Tibial artery (tissue), 4 donors: ENCODE measurements at regions of chr3 and their contacts with region 1.

Region 1: DNA sequence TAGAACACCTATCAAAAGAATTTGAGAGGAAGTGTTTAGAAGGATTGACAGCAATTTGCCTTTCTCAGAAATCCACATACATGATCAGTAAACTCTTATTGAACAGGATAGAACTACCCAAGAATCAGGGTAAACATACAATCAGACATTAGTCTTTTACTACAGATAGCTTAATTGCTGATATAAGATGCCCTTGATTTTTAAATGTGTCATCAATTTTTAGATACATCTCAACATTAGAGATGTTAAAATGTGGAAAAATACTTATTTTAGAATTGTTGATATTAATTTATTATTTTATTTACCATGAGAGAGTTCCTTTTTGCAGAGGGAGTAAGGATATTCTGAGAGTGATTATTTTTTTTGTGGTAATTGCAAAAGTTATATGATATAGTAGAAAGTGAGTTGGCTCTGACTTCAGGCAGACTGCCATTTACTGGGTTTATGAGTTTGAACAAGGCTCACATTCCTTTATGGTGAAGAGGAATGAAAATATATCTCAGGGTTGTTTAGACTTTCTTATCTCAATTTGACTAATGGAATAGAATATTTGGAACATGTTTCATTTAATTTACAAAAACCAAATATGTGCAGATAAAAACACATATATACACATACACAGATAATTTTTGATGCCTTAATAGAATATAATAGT is 302.8 kb upstream of the GOLIM4 start:
- DNase-seq: no peak
- H3K4me3 ChIP-seq: no peak overlapping the region
- H3K27ac ChIP-seq: no peak overlapping the region
- H3K4me1 ChIP-seq: no peaks in the 10 kb centered on the region
- H3K27me3 ChIP-seq: no peaks in the 10 kb centered on the region
- CTCF ChIP-seq: no peak

Region 2: DNA sequence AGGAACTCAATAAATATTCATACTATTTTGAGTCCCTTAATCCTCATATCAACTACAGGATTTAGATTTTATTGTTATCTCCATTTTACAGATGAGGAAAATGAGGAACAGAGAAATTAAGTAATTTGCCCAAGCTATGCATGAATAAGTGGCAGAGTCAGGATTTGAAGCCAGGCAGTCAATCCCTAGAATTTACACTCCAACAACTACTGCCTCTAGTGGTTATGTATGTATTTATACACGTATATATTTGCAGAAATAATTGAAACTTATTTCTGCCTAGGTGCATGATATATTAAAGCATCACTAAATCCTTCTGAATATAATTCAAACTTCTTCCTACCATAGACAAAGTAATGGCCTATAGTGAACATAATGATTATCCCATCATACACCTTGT is 525.6 kb before region 1 on chr3:
- intact Hi-C with region 1: no loop called
- DNase-seq: no peak
- H3K4me3 ChIP-seq: no peak overlapping the region
- H3K27ac ChIP-seq: no peak overlapping the region
- H3K4me1 ChIP-seq: peaks cover 0 to 39% (median 24%) of the 10 kb centered on the region in 4 donors
- H3K27me3 ChIP-seq: no peaks in the 10 kb centered on the region
- CTCF ChIP-seq: no peak

Region 3: DNA sequence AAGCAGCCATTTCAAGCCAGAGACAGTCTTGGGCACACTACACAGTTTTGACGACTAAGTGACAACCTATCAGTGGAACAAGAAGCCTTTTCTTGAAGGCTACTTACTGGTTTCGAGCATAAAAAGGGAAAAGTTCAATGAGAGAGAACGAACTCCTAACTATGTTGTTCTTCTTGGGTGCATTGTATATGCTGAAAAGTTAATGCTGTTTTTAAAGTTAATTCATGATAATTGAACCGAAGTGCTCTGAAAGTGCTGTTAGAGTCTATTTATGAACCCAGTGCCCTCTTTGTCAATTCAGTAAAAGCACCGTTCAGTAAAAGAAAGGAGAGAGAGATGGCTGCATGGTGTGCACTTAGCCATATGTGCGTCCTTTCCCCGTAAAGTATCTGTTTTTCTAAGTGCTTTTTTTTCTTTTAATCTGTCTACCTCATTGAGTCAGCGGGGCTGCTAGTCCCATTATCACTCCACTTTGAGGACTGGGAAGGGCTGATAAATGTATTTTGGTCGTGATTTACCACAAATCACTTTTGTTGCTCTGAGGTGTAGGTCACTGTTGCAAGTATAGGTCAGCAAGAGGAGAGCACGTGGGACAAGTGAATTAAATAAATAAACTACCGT is 78.0 kb after region 1 on chr3:
- intact Hi-C with region 1: loop called (anchors 5 kb)
- DNase-seq: no peak
- H3K4me3 ChIP-seq: no peak overlapping the region
- H3K27ac ChIP-seq: no peak overlapping the region
- H3K4me1 ChIP-seq: no peaks in the 10 kb centered on the region
- H3K27me3 ChIP-seq: no peaks in the 10 kb centered on the region
- CTCF ChIP-seq: no peak